SK-N-SH (cell line): ENCODE measurements at regions of chr2 and their contacts with region 1.

Region 1: GRCh38 chr2:108637304-108637669 is 82.0 kb upstream of the RANBP2 start:
- DNase-seq: no peak
- H3K4me3 ChIP-seq: no peak overlapping the region; a peak in 1 of 4 replicates
- H3K27ac ChIP-seq: peak overlapping the region; percentile 67 to 97; a peak in 3 of 4 replicates
- H3K4me1 ChIP-seq: peaks cover 49 to 50% of the 10 kb centered on the region in 2 experiments
- H3K27me3 ChIP-seq: no peaks in the 10 kb centered on the region
- CTCF ChIP-seq: no peak
- EP300 ChIP-seq: no peak
- RAD21 ChIP-seq: no peak

Region 2: GRCh38 chr2:108533832-108534583 is 103.3 kb before region 1 on chr2 and contains the start of gene LIMS1:
- CTCF ChIA-PET with region 1: interaction called, 13 read pairs
- POLR2A ChIA-PET with region 1: no interaction called
- DNase-seq: peak; percentile 97
- H3K4me3 ChIP-seq: peak within 1 kb of the TSS; percentile 87 to 98
- H3K27ac ChIP-seq: peak within 1 kb of the TSS; percentile 88 to 96
- H3K4me1 ChIP-seq: peaks cover 12% of the 10 kb centered on the region in 2 experiments; a peak in 3 of 4 replicates
- H3K27me3 ChIP-seq: no peaks in the 10 kb centered on the region
- CTCF ChIP-seq: no peak
- EP300 ChIP-seq: no peak
- RAD21 ChIP-seq: no peak
- polyA plus RNA-seq, gene LIMS1: 123 and 131 TPM in 2 replicates

Region 3: GRCh38 chr2:108583903-108584520 is 53.3 kb before region 1 on chr2:
- CTCF ChIA-PET with region 1: interaction called, 25 read pairs
- POLR2A ChIA-PET with region 1: no interaction called
- DNase-seq: peak; percentile 73
- H3K4me3 ChIP-seq: peak overlapping the region in 1 of 2 experiments; percentile 46; a peak in 1 of 4 replicates
- H3K27ac ChIP-seq: peak overlapping the region in 1 of 2 experiments; percentile 45; a peak in 2 of 4 replicates
- H3K4me1 ChIP-seq: peaks cover 6 to 29% of the 10 kb centered on the region in 2 experiments
- H3K27me3 ChIP-seq: no peaks in the 10 kb centered on the region
- CTCF ChIP-seq: peak; percentile 85
- EP300 ChIP-seq: no peak
- RAD21 ChIP-seq: peak; percentile 97

Region 4: GRCh38 chr2:108594132-108594981 is 42.9 kb before region 1 on chr2:
- CTCF ChIA-PET with region 1: interaction called, 60 read pairs
- POLR2A ChIA-PET with region 1: no interaction called
- DNase-seq: no peak
- H3K4me3 ChIP-seq: peak overlapping the region; percentile 9 to 27; a peak in 3 of 4 replicates
- H3K27ac ChIP-seq: peak overlapping the region; percentile 88 to 99
- H3K4me1 ChIP-seq: peaks cover 10 to 29% of the 10 kb centered on the region in 2 experiments
- H3K27me3 ChIP-seq: no peaks in the 10 kb centered on the region
- CTCF ChIP-seq: no peak; the same call in 1 of the 2 replicates
- EP300 ChIP-seq: peak in 1 of 2 experiments; percentile 95; a peak in 2 of 4 replicates
- RAD21 ChIP-seq: no peak

Region 5: DNA sequence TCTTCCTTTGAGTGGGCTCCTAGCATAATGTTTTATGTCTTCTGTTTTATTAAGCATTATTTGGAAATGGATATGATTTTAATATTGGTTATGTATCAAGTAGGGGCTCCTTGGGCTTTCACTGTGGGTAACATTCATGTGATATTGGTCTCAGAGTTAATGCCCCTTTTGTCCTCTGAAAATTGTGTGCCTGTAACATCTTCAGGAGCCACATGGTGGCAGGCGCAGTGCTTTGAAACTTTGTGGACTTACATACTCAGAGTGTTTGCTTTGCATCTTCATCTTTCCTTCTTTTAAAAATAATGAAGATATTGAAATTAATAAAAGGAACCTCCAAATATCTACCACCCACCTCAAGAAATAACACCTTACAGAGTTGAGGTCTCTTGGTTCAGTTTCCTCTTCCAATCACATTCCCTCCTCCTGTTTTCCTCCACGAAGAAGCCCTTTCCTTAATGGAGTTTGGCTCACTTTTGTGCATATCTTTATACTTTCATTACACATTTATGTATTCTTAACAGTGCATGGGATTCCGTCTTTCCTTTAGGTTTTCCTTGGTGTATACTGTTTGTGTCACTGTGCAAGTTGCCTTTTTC is 29.5 kb before region 1 on chr2:
- CTCF ChIA-PET with region 1: interaction called, 188 read pairs
- POLR2A ChIA-PET with region 1: no interaction called
- DNase-seq: peak; percentile 33
- H3K4me3 ChIP-seq: no peak overlapping the region; a peak in 1 of 4 replicates
- H3K27ac ChIP-seq: no peak overlapping the region
- H3K4me1 ChIP-seq: peaks cover 0 to 6% of the 10 kb centered on the region in 2 experiments; a peak in 2 of 4 replicates
- H3K27me3 ChIP-seq: no peaks in the 10 kb centered on the region
- CTCF ChIP-seq: peak; percentile 74
- EP300 ChIP-seq: no peak
- RAD21 ChIP-seq: peak; percentile 78

Region 6: GRCh38 chr2:108621087-108621559 is 16.2 kb before region 1 on chr2:
- CTCF ChIA-PET with region 1: interaction called, 188 read pairs
- POLR2A ChIA-PET with region 1: interaction called, 4 read pairs
- DNase-seq: no peak
- H3K4me3 ChIP-seq: no peak overlapping the region
- H3K27ac ChIP-seq: no peak overlapping the region
- H3K4me1 ChIP-seq: peaks cover 34 to 44% of the 10 kb centered on the region in 2 experiments
- H3K27me3 ChIP-seq: no peaks in the 10 kb centered on the region
- CTCF ChIP-seq: no peak
- EP300 ChIP-seq: no peak
- RAD21 ChIP-seq: no peak

Region 7: GRCh38 chr2:109054865-109055264 is 417.6 kb after region 1 on chr2:
- CTCF ChIA-PET with region 1: no interaction called
- POLR2A ChIA-PET with region 1: no interaction called
- DNase-seq: no peak
- H3K4me3 ChIP-seq: no peak overlapping the region
- H3K27ac ChIP-seq: no peak overlapping the region
- H3K4me1 ChIP-seq: peaks cover 0 to 12% of the 10 kb centered on the region in 2 experiments; a peak in 1 of 4 replicates
- H3K27me3 ChIP-seq: peaks cover 7% of the 10 kb centered on the region
- CTCF ChIP-seq: no peak
- EP300 ChIP-seq: no peak
- RAD21 ChIP-seq: no peak

Region 8: DNA sequence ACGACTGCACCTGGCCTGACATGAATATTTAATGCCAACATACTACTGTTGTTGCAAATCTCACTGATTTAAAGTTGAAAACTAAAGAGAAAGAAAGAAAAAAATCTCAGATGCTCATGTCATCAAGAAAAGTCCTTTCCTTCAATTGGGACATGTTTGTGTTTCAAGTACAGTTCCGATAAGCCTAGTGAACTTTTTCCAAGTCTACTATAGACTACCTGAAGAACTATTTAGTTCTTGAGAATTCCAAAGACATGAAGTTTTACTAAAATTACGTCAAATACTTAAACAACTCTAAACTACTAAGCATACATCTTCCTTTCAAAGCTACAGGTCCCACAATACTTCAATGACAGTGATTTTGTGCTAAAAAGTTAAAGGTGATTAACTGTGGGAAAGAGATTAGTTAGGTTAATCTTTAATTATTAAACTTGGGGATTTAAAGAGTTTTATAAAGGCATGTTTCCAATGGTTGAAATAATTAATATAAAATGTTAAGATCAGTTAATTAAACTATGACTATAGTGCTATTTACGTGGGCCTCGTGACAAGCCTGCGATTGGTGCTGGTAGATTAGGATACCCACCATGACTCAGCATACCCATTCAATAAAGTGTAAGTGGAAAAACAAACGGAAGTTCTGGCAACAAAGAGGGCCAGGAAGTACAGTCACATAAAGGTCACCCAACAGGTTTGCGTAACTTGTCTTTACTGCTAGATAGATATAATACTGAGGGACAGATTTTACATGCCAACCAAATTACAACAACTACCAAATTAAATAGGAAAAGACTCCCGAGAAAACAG is 921.0 kb after region 1 on chr2:
- CTCF ChIA-PET with region 1: no interaction called
- POLR2A ChIA-PET with region 1: no interaction called
- DNase-seq: no peak
- H3K4me3 ChIP-seq: no peak overlapping the region
- H3K27ac ChIP-seq: peak overlapping the region in 1 of 2 experiments; percentile 57; a peak in 2 of 4 replicates
- H3K4me1 ChIP-seq: peaks cover 0 to 16% of the 10 kb centered on the region in 2 experiments; a peak in 1 of 4 replicates
- H3K27me3 ChIP-seq: no peaks in the 10 kb centered on the region
- CTCF ChIP-seq: no peak
- EP300 ChIP-seq: peak in 1 of 2 experiments; percentile 56; a peak in 1 of 4 replicates
- RAD21 ChIP-seq: no peak